ENCODE measurements at regions of chr18 and their contacts with region 1.

Region 1: GRCh38 chr18:74551936-74552555 is 17.7 kb downstream of the CNDP1 start:
- DNase-seq: peak; percentile 93
- ATAC-seq: peak; percentile 94

Region 2: GRCh38 chr18:74353169-74353775 is 198.8 kb before region 1 on chr18:
- intact Hi-C with region 1: loop called (anchors 5 kb)
- DNase-seq: peak; percentile 74
- ATAC-seq: peak; percentile 95

Region 3: DNA sequence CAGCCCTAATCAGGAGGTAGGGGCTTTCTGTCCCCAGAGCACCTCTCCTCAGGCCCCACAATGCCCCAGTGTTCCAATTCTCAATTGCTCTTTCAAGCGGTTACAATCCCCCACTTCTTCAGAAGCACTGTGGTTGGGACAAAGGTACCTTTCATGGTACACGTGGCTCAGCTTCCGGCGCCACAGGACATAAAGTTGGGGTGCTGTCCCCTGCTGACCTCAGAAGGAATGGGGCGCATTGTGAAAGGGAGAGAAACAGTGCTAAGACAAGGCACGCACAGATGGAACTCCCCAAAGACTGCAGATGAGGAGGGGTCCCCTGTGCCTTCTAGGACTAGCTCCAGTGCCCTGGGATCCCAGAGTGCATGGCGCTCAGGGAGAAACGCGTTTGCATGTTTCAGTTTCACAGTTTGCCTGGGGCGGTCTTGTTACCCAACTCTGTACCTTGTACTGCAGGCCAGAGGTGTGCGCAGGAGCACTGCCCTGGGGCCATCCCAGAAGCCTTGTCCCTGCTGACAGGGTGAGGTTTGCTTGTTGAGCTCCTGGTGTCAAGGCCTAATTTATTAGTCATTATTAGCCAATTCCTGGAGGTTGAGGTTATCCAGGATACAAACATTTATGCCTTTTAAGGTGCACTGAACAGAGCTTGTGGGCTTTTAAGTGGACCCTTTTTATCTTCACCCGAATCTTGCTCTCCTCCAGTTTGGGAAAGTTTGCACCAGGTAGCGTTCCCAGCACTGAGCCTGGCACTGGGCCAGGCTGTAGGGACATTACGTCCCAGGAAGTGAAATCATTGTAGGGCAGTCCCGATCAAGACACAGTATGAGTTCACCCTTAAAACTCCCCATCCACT is 10.1 kb before region 1 on chr18:
- intact Hi-C with region 1: no loop called
- DNase-seq: no peak
- ATAC-seq: no peak